ENCODE measurements at regions of chr2 and their contacts with region 1.

Region 1: DNA sequence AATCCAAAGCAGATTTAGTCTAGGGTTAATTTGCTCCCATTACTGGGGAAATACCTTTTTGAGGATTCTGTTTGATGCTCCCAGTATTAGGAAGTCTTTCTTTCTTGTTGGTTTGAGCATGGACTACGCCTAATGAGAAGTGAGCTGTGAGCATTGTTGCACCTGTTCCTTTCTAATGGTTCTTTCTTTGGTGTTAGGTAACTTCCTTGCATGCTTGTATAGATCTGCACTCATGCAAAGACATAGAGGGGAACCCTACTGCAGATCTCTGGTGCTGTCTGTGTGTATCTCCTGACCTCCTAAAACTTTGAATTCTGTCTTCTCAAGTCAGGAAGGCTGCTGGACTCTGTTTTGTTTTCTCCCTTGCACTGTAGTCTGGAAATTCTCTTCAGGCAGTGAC is 12.8 kb upstream of the TDRD15 start:
- DNase-seq: no peak

Region 2: GRCh38 chr2:21165350-21165749 is 54.3 kb after region 1 on chr2:
- intact Hi-C with region 1: no loop called
- DNase-seq: no peak

Region 3: GRCh38 chr2:21981127-21981526 is 870.1 kb after region 1 on chr2:
- intact Hi-C with region 1: loop called in 1 of 2 experiments (anchors 5 kb)
- DNase-seq: no peak